Cardiac septum (tissue), 1 donor: ENCODE measurements at regions of chr1 and their contacts with region 1.

Region 1: GRCh38 chr1:206925106-206925736 is 3.5 kb upstream of the FCMR start:
- DNase-seq: no peak

Region 2: GRCh38 chr1:206489980-206490770 is 435.0 kb before region 1 on chr1:
- intact Hi-C with region 1: no loop called
- DNase-seq: peak; percentile 88

Region 3: GRCh38 chr1:207077470-207078377 is 152.5 kb after region 1 on chr1:
- intact Hi-C with region 1: loop called (anchors 10 kb)
- DNase-seq: no peak